ENCODE measurements at regions of chr4 and their contacts with region 1.

Region 1: DNA sequence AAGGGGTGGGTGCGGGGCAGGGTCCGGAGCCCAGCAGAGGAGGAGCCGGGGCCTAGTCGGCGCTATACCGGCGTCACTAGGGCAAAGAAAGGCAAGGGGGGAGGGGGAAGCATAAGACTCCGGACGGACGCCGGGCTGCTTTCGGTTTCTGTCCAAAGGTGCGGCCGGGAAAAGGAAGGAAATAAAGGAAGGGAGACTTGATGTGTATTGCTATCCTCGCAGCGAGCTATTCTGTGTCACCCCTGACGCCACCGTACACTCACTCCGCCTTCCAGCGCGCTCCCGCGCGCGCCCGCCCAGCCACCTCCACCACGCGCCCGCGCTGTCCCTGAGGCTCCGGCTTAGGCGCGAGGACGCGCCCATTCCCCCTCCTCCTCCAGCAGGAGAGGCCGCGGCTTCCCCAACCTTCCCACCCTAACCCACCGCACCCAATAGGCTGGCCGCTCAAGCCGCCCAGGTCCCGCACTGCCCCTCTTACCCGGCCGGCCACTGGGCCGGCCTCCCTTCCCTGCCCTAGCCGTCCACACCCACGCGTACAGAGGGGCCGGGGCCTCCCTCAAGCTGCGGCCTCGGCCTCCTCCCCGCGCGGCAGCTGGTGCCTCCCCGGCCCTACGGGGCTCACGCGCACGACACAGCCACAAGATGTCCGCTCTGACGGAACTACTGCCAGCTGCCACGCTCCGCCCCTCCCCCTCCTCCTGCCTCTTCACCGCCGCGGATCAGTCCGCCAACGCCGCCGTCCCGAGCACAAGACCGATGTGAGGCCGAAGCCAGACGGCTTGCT is at the start of gene UBE2D3:
- DNase-seq: peak; percentile 97
- ATAC-seq: peak; percentile 60
- H3K4me3 Mint-ChIP-seq: no peak within 1 kb of the TSS
- H3K27ac Mint-ChIP-seq: no peak within 1 kb of the TSS
- H3K4me1 Mint-ChIP-seq: peaks cover 21% of the 10 kb centered on the region
- H3K27me3 Mint-ChIP-seq: no peaks in the 10 kb centered on the region
- CTCF ChIP-seq: no peak
- total RNA-seq, gene UBE2D3: 410 to 427 TPM

Region 2: DNA sequence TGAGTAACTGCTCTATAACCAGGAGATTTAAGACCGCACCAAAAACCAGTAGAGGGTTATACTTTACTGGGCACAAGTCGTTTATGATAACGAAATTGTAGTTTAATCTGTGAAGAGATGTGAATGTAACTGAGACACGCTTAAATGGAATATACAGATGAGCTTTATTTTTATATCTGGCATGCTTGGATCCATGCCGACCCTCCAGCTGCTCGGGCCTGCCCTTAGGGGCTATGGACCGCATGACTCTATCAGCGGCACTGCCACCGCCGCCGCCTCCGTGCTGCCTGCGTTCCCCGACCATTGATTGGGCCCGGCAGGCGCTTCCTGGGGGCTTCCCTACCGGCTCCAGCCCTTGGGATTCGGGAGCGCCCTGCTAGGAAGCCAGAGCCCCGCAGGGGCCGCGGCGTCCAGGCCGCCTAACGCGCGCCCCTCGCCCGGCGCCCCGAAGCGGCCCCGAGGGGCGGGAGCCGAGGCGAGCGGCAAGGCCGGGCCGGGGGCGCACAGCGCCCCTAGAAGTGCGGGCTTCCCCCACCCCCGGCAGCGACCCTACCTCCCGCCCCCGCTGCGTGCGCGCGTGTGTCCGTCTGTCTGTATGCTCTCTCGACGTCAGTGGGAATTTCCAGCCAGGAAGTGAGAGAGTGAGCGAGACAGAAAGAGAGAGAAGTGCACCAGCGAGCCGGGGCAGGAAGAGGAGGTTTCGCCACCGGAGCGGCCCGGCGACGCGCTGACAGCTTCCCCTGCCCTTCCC is 326.2 kb before region 1 on chr4 and contains the start of gene NFKB1:
- CTCF ChIA-PET with region 1: no interaction called
- POLR2A ChIA-PET with region 1: interaction called, 20 read pairs
- intact Hi-C with region 1: loop called (anchors 5 kb)
- DNase-seq: peak; percentile 89
- ATAC-seq: peak; percentile 70
- H3K4me3 Mint-ChIP-seq: peak within 1 kb of the TSS; percentile 93
- H3K27ac Mint-ChIP-seq: peak within 1 kb of the TSS; percentile 93
- H3K4me1 Mint-ChIP-seq: peaks cover 12% of the 10 kb centered on the region
- H3K27me3 Mint-ChIP-seq: no peaks in the 10 kb centered on the region
- CTCF ChIP-seq: no peak
- total RNA-seq, gene NFKB1: 224 to 230 TPM

Region 3: GRCh38 chr4:102760645-102761295 is 66.3 kb before region 1 on chr4 and contains the start of gene MANBA:
- CTCF ChIA-PET with region 1: no interaction called
- POLR2A ChIA-PET with region 1: interaction called, 15 read pairs
- intact Hi-C with region 1: no loop called
- DNase-seq: peak; percentile 91
- ATAC-seq: peak; percentile 92
- H3K4me3 Mint-ChIP-seq: peak within 1 kb of the TSS; percentile 92
- H3K27ac Mint-ChIP-seq: peak within 1 kb of the TSS; percentile 86
- H3K4me1 Mint-ChIP-seq: peaks cover 27% of the 10 kb centered on the region
- H3K27me3 Mint-ChIP-seq: peaks cover 2% of the 10 kb centered on the region
- CTCF ChIP-seq: no peak
- total RNA-seq, gene MANBA: 14.5 to 16.3 TPM

Region 4: DNA sequence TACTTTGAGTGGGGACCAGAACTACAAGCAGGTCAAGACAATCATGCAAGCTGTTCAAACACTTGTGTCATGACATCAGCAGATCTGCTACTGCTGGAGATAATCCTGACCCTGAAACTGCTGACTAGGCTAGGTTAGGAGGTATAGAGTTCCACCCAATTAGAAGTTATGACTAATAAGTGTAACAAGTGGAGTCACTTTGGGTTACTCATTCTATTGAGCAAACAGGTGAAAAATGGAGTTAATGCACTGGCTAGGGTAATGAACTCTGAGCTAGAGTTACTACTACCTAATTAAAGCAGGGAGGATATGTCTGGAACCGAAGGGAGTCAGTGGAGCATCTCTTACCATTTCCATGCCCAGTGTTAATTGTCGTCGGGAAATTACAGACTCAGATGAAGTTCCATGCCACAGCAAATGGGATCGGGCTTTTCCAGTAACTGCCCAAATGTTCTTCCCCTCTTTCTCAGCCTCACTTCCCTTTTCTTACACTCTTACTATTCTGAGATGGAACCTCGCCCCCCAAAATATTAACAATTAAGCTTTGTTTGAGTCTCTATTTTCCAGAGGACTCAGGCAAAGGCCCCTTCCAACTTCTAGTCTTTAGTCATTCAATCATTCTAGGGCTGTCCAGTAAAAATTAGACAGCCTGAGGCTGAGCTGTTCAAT is 46.5 kb before region 1 on chr4:
- CTCF ChIA-PET with region 1: no interaction called
- POLR2A ChIA-PET with region 1: no interaction called
- intact Hi-C with region 1: no loop called
- DNase-seq: no peak
- ATAC-seq: peak; percentile 73
- H3K4me3 Mint-ChIP-seq: no peak overlapping the region
- H3K27ac Mint-ChIP-seq: no peak overlapping the region
- H3K4me1 Mint-ChIP-seq: no peaks in the 10 kb centered on the region
- H3K27me3 Mint-ChIP-seq: peaks cover 2% of the 10 kb centered on the region
- CTCF ChIP-seq: no peak

Region 5: DNA sequence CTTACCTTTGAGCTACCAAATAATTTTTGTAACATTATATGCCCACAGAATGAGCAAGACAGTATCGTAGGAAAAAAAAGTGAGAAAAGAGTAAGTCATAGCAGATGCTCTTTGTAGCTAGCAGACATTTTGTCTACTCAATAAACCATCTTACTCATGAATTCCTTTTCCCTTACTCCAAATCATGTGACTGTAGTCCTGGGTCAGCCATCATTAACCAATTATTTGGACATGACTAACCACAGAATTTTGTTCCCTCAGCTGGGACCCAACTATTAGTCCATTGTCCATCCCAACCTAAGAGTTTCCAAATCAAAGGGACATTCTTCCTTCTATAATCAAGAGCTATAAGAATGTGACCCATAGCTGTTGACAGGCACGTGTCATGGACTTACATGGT is 11.1 kb before region 1 on chr4:
- CTCF ChIA-PET with region 1: interaction called, 7 read pairs
- POLR2A ChIA-PET with region 1: interaction called, 63 read pairs
- intact Hi-C with region 1: no loop called
- DNase-seq: no peak
- ATAC-seq: no peak
- H3K4me3 Mint-ChIP-seq: no peak overlapping the region
- H3K27ac Mint-ChIP-seq: peak overlapping the region; percentile 85
- H3K4me1 Mint-ChIP-seq: peaks cover 86% of the 10 kb centered on the region
- H3K27me3 Mint-ChIP-seq: no peaks in the 10 kb centered on the region
- CTCF ChIP-seq: no peak

Region 6: DNA sequence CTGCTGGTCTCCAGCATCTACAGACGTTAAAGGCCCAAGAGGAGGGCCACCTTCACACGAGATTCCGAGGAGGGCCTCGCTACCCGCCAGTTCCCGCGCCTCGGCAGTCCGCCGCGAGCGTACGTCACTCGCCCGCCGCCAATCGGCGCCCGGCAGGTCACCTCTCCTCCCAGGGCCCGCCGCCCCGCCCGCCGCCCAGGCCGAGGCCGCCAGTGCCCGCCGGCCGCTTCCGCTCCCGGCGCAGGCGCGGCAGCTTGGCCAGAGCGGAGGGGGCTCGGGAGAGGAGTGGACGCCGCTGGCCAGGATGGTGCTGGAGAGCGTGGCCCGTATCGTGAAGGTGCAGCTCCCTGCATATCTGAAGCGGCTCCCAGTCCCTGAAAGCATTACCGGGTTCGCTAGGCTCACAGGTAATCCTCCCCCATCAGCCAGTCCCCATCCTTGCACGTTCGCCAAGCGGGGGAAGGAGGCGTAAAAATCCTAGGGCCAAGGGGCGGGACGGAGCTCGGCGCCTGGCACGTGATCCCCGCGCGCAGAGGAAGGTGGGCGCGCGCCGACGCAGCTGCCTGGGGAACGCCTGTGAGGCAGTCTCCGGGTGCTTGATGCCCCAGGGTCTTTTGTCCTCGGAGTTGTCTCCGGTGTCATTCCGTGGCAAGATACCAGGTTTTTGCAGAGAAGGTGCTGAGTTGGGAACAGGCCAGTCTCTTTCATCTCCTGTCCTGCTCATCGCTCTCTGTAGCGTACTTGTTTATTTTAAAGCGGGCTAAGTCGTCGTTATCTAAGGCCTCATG is 41.9 kb after region 1 on chr4 and contains the start of gene CISD2:
- CTCF ChIA-PET with region 1: interaction called, 5 read pairs
- POLR2A ChIA-PET with region 1: interaction called, 100 read pairs
- intact Hi-C with region 1: loop called (anchors 1 kb)
- DNase-seq: peak; percentile 95
- ATAC-seq: peak; percentile 86
- H3K4me3 Mint-ChIP-seq: peak within 1 kb of the TSS; percentile 88
- H3K27ac Mint-ChIP-seq: peak within 1 kb of the TSS; percentile 99
- H3K4me1 Mint-ChIP-seq: peaks cover 54% of the 10 kb centered on the region
- H3K27me3 Mint-ChIP-seq: no peaks in the 10 kb centered on the region
- CTCF ChIP-seq: no peak
- total RNA-seq, gene CISD2: 31.1 to 32.3 TPM

Region 7: GRCh38 chr4:102918859-102919258 is 91.8 kb after region 1 on chr4:
- CTCF ChIA-PET with region 1: no interaction called
- POLR2A ChIA-PET with region 1: no interaction called
- intact Hi-C with region 1: no loop called
- DNase-seq: no peak
- ATAC-seq: no peak
- H3K4me3 Mint-ChIP-seq: no peak overlapping the region
- H3K27ac Mint-ChIP-seq: no peak overlapping the region
- H3K4me1 Mint-ChIP-seq: no peaks in the 10 kb centered on the region
- H3K27me3 Mint-ChIP-seq: no peaks in the 10 kb centered on the region
- CTCF ChIP-seq: no peak